ENCODE measurements at regions of chr7 and their contacts with region 1.

Region 1: GRCh38 chr7:26398756-26399501 is 107.3 kb downstream of the SNX10 start:
- DNase-seq: peak; percentile 32 to 34
- H3K4me3 ChIP-seq: peak overlapping the region; percentile 3 to 57 (median 39)
- H3K27ac ChIP-seq: no peak overlapping the region
- H3K4me1 ChIP-seq: peaks cover 0 to 7% of the 10 kb centered on the region in 2 donors
- H3K27me3 ChIP-seq: no peaks in the 10 kb centered on the region
- CTCF ChIP-seq: peak in 2 of 6 experiments; percentile 2 to 20
- POLR2A ChIP-seq: no peak

Region 2: GRCh38 chr7:26449175-26450165 is 50.5 kb after region 1 on chr7:
- intact Hi-C with region 1: loop called (anchors 10 kb)
- DNase-seq: no peak
- H3K4me3 ChIP-seq: no peak overlapping the region
- H3K27ac ChIP-seq: no peak overlapping the region
- H3K4me1 ChIP-seq: no peaks in the 10 kb centered on the region
- H3K27me3 ChIP-seq: no peaks in the 10 kb centered on the region
- CTCF ChIP-seq: no peak
- POLR2A ChIP-seq: no peak